B cell (primary cell): ENCODE measurements at regions of chr1 and their contacts with region 1.

Region 1: DNA sequence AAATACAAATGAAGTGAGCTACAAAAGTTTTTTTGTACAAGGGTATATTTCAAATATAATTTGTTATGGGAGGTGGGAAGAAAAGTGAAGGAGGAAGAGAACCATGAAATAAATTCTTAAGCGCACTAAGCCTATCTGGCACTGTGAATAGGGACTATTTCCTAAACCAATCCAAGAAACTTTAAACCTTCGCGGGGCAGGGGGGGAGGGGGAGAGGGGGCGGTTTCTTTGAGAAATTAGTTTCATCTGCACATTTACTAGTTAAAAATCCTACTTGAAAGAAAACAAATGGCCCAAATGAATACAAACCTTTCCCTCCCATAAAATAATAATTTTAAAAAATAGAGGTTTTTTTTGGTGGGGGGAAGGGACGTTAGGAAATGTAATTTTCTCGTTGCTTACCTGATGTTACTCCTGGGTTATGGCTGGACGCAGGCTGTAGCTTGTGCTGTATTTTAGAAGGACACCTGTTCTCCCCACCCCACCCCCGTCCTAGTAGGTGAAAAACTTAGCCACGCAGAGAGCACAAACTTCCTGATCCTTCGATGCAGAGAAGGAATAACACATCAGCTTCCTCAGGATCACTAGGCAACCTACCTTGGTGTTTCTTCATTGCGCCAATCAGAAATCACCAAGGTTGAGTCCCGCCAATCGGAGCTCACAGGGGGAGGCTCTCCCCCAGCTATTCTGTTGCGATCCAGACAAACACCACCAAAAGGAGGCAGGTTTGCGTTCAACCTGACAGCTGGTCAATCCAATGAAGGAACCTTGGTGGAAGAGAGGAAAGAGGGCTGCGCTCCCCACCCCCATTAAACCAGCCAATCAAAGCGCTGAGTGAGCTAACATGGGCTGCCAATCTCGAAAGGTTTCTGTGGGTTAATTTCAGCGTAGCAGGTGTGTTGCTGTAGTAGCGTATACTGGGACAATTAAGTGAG is at the start of gene GOLPH3L:
- DNase-seq: peak; percentile 93
- ATAC-seq: peak; percentile 99
- H3K4me3 ChIP-seq: peak within 1 kb of the TSS; percentile 77 to 99 (median 90)
- H3K4me3 Mint-ChIP-seq: peak within 1 kb of the TSS; percentile 100
- H3K27ac ChIP-seq: peak within 1 kb of the TSS; percentile 66 to 78
- H3K27ac Mint-ChIP-seq: peak within 1 kb of the TSS; percentile 97
- H3K4me1 ChIP-seq: peaks cover 4 to 11% of the 10 kb centered on the region in 2 donors
- H3K4me1 Mint-ChIP-seq: peaks cover 19% of the 10 kb centered on the region
- H3K27me3 ChIP-seq: no peaks in the 10 kb centered on the region
- H3K27me3 Mint-ChIP-seq: no peaks in the 10 kb centered on the region
- CTCF ChIP-seq: no peak
- total RNA-seq, gene GOLPH3L: 22.1 and 25.3 TPM in 2 replicates

Region 2: DNA sequence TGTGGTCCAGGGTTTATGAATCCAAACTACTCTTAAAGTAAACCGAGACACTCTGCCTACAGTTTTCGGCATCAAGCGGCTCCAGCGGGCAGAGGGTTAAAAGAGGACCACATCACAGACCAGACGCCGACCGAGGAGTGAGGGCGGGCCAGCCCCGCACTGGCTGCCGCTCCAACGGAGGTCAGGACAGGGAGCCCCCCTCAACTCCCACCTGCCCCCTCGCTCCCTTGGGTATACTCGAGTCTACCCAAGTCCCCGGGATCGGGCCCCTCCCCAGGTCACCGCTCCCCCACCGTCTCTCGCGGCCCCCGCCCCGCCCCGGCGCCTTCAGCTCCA is 179.2 kb after region 1 on chr1:
- CTCF ChIA-PET with region 1: no interaction called
- POLR2A ChIA-PET with region 1: no interaction called
- intact Hi-C with region 1: loop called (anchors 1 kb)
- DNase-seq: no peak
- ATAC-seq: no peak
- H3K4me3 ChIP-seq: peak overlapping the region; percentile 72 to 87 (median 84)
- H3K4me3 Mint-ChIP-seq: peak overlapping the region; percentile 88
- H3K27ac ChIP-seq: peak overlapping the region; percentile 64 to 80
- H3K27ac Mint-ChIP-seq: peak overlapping the region; percentile 90
- H3K4me1 ChIP-seq: peaks cover 20% of the 10 kb centered on the region in 2 donors
- H3K4me1 Mint-ChIP-seq: peaks cover 32% of the 10 kb centered on the region
- H3K27me3 ChIP-seq: no peaks in the 10 kb centered on the region
- H3K27me3 Mint-ChIP-seq: no peaks in the 10 kb centered on the region
- CTCF ChIP-seq: no peak

Region 3: DNA sequence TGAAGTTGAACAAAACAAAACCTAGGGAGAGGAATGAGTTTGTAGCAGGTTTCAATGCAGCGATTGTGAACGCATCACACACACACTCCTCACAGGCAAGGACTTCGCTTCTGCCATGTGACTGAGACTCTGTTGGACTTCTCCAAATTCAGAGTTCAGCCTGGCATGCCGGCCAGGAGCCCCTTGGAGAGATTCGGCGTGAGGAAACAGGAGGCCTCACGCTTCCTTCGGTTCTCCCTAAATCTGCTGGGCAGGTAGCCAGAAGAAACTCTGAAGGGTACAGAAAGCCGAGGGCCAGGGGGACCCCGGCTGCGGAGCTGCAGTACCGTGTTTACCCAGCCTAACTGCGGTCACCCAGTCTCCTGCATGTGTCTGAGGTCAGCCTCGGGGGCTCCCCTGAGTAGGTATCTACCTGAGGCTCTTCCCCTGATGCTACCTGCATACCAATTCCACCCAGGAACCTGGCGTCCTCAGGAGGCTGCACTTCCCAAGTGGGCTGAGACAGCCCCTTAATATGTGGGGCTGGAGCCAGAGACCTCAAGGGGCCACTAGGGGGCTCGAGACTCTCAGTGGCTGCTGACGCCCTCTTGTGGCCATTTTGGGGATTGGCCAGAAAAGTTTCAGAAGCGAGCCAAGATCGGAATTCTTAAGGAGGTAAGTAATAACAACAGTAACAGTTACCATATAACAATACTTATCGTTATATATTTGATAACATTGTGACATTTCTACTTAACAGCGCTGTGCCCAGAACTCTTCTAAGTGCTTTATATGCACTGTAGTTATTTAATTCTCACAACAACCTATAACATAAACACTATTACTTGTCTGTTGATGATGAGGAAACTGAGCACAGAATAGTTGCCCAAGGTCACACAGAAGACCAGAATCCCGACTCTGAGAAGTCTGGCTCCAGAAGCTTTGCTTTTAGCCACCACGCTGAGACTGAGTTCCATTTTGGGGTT is 282.5 kb after region 1 on chr1:
- CTCF ChIA-PET with region 1: no interaction called
- POLR2A ChIA-PET with region 1: no interaction called
- intact Hi-C with region 1: no loop called
- DNase-seq: peak; percentile 92
- ATAC-seq: peak; percentile 56
- H3K4me3 ChIP-seq: peak overlapping the region; percentile 38 to 72 (median 50)
- H3K4me3 Mint-ChIP-seq: peak overlapping the region; percentile 79
- H3K27ac ChIP-seq: no peak overlapping the region
- H3K27ac Mint-ChIP-seq: peak overlapping the region; percentile 88
- H3K4me1 ChIP-seq: peaks cover 22 to 35% of the 10 kb centered on the region in 2 donors
- H3K4me1 Mint-ChIP-seq: peaks cover 31% of the 10 kb centered on the region
- H3K27me3 ChIP-seq: no peaks in the 10 kb centered on the region
- H3K27me3 Mint-ChIP-seq: no peaks in the 10 kb centered on the region
- CTCF ChIP-seq: peak; percentile 100